CD8-positive, alpha-beta T cell (primary cell): ENCODE measurements at regions of chr3 and their contacts with region 1.

Region 1: GRCh38 chr3:128879125-128879969 is at the start of gene ACAD9:
- DNase-seq: peak; percentile 90 to 99 (median 96)
- ATAC-seq: peak; percentile 90
- H3K4me3 ChIP-seq: peak within 1 kb of the TSS; percentile 75 to 92
- H3K4me3 Mint-ChIP-seq: peak within 1 kb of the TSS; percentile 85
- H3K27ac ChIP-seq: peak within 1 kb of the TSS; percentile 93 to 100
- H3K27ac Mint-ChIP-seq: peak within 1 kb of the TSS; percentile 96
- H3K4me1 ChIP-seq: peaks cover 56% of the 10 kb centered on the region
- H3K4me1 Mint-ChIP-seq: peaks cover 74% of the 10 kb centered on the region
- H3K27me3 ChIP-seq: no peaks in the 10 kb centered on the region
- H3K27me3 Mint-ChIP-seq: no peaks in the 10 kb centered on the region
- CTCF ChIP-seq: no peak
- total RNA-seq, gene ACAD9: 43.1 to 47.1 TPM

Region 2: GRCh38 chr3:128051837-128052594 is 827.3 kb before region 1 on chr3 and contains the start of gene SEC61A1:
- CTCF ChIA-PET with region 1: no interaction called
- POLR2A ChIA-PET with region 1: no interaction called
- intact Hi-C with region 1: loop called in 1 of 2 experiments (anchors 10 kb)
- DNase-seq: peak; percentile 87 to 97 (median 95)
- ATAC-seq: peak; percentile 93
- H3K4me3 ChIP-seq: peak within 1 kb of the TSS; percentile 92 to 95
- H3K4me3 Mint-ChIP-seq: peak within 1 kb of the TSS; percentile 99
- H3K27ac ChIP-seq: peak within 1 kb of the TSS; percentile 78 to 85
- H3K27ac Mint-ChIP-seq: peak within 1 kb of the TSS; percentile 98
- H3K4me1 ChIP-seq: peaks cover 35% of the 10 kb centered on the region
- H3K4me1 Mint-ChIP-seq: peaks cover 43% of the 10 kb centered on the region
- H3K27me3 ChIP-seq: no peaks in the 10 kb centered on the region
- H3K27me3 Mint-ChIP-seq: no peaks in the 10 kb centered on the region
- CTCF ChIP-seq: no peak
- total RNA-seq, gene SEC61A1: 125 to 131 TPM

Region 3: GRCh38 chr3:128680602-128681368 is 198.6 kb before region 1 on chr3:
- CTCF ChIA-PET with region 1: interaction called, 12 read pairs
- POLR2A ChIA-PET with region 1: interaction called, 9 read pairs
- intact Hi-C with region 1: loop called (anchors 1 kb)
- DNase-seq: peak; percentile 95 to 98 (median 97)
- ATAC-seq: peak; percentile 89
- H3K4me3 ChIP-seq: peak overlapping the region; percentile 70 to 82
- H3K4me3 Mint-ChIP-seq: peak overlapping the region; percentile 90
- H3K27ac ChIP-seq: peak overlapping the region; percentile 93 to 98
- H3K27ac Mint-ChIP-seq: peak overlapping the region; percentile 99
- H3K4me1 ChIP-seq: peaks cover 14% of the 10 kb centered on the region
- H3K4me1 Mint-ChIP-seq: peaks cover 29% of the 10 kb centered on the region
- H3K27me3 ChIP-seq: no peaks in the 10 kb centered on the region
- H3K27me3 Mint-ChIP-seq: no peaks in the 10 kb centered on the region
- CTCF ChIP-seq: peak; percentile 86

Region 4: DNA sequence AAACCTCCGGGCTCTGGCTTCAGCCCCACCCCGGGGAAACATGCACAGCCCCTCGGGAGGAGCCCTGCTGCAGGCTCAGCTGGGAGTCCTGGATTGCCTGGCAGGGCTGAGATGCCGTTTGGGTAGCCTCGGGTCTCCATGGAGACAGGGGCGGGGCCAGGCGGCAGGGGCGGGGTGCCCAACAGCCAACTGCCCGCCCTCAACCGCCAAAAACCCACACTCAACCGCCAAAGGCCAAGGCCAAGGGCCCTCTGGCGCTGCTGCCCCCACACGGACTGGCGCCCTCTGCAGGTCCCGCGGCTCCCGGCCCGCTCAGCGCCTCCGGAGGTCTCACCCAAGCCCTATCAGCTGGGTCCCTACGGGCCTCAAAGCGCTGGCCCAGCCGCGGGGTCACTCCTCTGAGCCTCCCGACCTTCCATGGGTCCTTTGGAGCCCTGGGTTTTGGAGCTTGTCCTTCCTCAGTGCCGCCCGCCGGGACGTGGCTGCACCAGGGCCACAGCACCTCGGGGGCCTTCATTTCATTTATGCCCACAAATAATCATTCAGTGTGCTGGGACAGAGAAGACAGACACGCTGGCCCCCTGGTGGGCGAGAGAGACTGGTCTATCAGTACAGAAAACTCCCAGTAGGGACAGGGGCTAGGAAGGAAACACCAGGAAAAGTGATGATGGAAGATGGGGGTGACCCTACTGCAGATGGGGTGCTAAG is 33.4 kb before region 1 on chr3:
- CTCF ChIA-PET with region 1: interaction called, 6 read pairs
- POLR2A ChIA-PET with region 1: no interaction called
- intact Hi-C with region 1: loop called in 1 of 2 experiments (anchors 2 kb)
- DNase-seq: peak; percentile 58 to 85 (median 79)
- ATAC-seq: peak; percentile 82
- H3K4me3 ChIP-seq: peak overlapping the region; percentile 51 to 74
- H3K4me3 Mint-ChIP-seq: peak overlapping the region; percentile 80
- H3K27ac ChIP-seq: peak overlapping the region; percentile 17 to 45
- H3K27ac Mint-ChIP-seq: peak overlapping the region; percentile 78
- H3K4me1 ChIP-seq: peaks cover 19% of the 10 kb centered on the region
- H3K4me1 Mint-ChIP-seq: peaks cover 9% of the 10 kb centered on the region
- H3K27me3 ChIP-seq: no peaks in the 10 kb centered on the region
- H3K27me3 Mint-ChIP-seq: no peaks in the 10 kb centered on the region
- CTCF ChIP-seq: peak; percentile 75

Region 5: GRCh38 chr3:128969993-128970739 is 90.8 kb after region 1 on chr3:
- CTCF ChIA-PET with region 1: interaction called, 16 read pairs
- POLR2A ChIA-PET with region 1: interaction called, 3 read pairs
- intact Hi-C with region 1: no loop called
- DNase-seq: peak; percentile 30 to 80 (median 68)
- ATAC-seq: peak; percentile 89
- H3K4me3 ChIP-seq: no peak overlapping the region
- H3K4me3 Mint-ChIP-seq: no peak overlapping the region
- H3K27ac ChIP-seq: no peak overlapping the region
- H3K27ac Mint-ChIP-seq: no peak overlapping the region
- H3K4me1 ChIP-seq: peaks cover 6% of the 10 kb centered on the region
- H3K4me1 Mint-ChIP-seq: peaks cover 7% of the 10 kb centered on the region
- H3K27me3 ChIP-seq: peaks cover 0 to 2% of the 10 kb centered on the region in 2 experiments
- H3K27me3 Mint-ChIP-seq: no peaks in the 10 kb centered on the region
- CTCF ChIP-seq: peak; percentile 96

Region 6: DNA sequence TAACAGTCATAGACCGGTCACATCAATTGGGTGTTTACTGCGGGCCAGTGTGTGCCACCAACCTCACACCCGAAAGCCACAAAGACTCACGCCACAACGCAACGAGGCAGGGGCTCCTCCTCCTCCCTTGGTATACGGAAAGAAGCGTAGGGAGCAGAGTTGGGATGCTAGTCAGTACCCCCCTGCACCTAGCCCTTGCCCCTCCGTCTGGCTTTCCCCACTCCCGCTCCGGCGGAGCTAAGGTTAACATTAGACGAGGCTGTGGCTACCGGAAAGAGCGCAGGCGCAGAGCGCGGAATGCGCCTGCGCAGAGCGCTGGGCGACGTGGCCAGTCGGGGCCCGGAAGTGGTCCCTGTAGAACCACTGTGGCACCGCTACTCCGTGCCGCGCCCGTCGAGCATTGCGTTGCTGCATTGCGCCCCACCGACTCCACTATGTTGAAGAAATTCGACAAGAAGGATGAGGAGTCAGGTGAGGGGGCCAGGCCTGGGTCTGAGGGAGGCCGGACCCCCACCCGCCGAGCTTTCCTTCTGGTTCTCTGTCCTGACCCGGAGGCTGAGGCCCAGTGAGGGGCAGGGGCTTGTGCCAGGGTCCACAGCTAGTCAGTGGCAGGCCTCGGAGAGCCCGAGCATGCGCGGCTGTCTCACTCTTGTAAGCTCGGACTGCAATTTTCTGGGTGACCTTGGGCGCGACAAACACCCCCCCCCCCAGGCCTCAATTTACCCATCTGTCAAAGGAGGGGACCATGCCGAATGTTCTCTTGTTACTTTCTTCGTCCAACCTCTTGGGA is 370.1 kb after region 1 on chr3 and contains the start of gene COPG1:
- CTCF ChIA-PET with region 1: interaction called, 13 read pairs
- POLR2A ChIA-PET with region 1: interaction called, 3 read pairs
- intact Hi-C with region 1: loop called (anchors 1 to 2 kb)
- DNase-seq: peak; percentile 72 to 95 (median 85)
- ATAC-seq: peak; percentile 83
- H3K4me3 ChIP-seq: peak within 1 kb of the TSS; percentile 80 to 87
- H3K4me3 Mint-ChIP-seq: peak within 1 kb of the TSS; percentile 96
- H3K27ac ChIP-seq: peak within 1 kb of the TSS; percentile 83 to 89
- H3K27ac Mint-ChIP-seq: peak within 1 kb of the TSS; percentile 96
- H3K4me1 ChIP-seq: peaks cover 31% of the 10 kb centered on the region
- H3K4me1 Mint-ChIP-seq: peaks cover 49% of the 10 kb centered on the region
- H3K27me3 ChIP-seq: no peaks in the 10 kb centered on the region
- H3K27me3 Mint-ChIP-seq: no peaks in the 10 kb centered on the region
- CTCF ChIP-seq: no peak
- total RNA-seq, gene COPG1: 77.0 to 93.5 TPM

Region 7: GRCh38 chr3:130111185-130111864 is 1232.0 kb after region 1 on chr3:
- CTCF ChIA-PET with region 1: no interaction called
- POLR2A ChIA-PET with region 1: no interaction called
- intact Hi-C with region 1: loop called in 1 of 2 experiments (anchors 10 kb)
- DNase-seq: peak; percentile 97 to 100 (median 99)
- ATAC-seq: peak; percentile 100
- H3K4me3 ChIP-seq: peak overlapping the region; percentile 69 to 89
- H3K4me3 Mint-ChIP-seq: peak overlapping the region; percentile 99
- H3K27ac ChIP-seq: peak overlapping the region; percentile 82 to 95
- H3K27ac Mint-ChIP-seq: peak overlapping the region; percentile 100
- H3K4me1 ChIP-seq: peaks cover 3% of the 10 kb centered on the region
- H3K4me1 Mint-ChIP-seq: peaks cover 28% of the 10 kb centered on the region
- H3K27me3 ChIP-seq: no peaks in the 10 kb centered on the region
- H3K27me3 Mint-ChIP-seq: no peaks in the 10 kb centered on the region
- CTCF ChIP-seq: no peak